ENCODE measurements at regions of chr5 and their contacts with region 1.

Region 1: GRCh38 chr5:122704243-122705036 is 70.4 kb upstream of the SNX2 start:
- DNase-seq: no peak
- H3K4me3 ChIP-seq: no peak overlapping the region
- H3K27me3 ChIP-seq: no peaks in the 10 kb centered on the region
- CTCF ChIP-seq: peak; percentile 70

Region 2: GRCh38 chr5:122653087-122653959 is 51.1 kb before region 1 on chr5:
- CTCF ChIA-PET with region 1: no interaction called
- POLR2A ChIA-PET with region 1: no interaction called
- DNase-seq: no peak
- H3K4me3 ChIP-seq: no peak overlapping the region
- H3K27me3 ChIP-seq: no peaks in the 10 kb centered on the region
- CTCF ChIP-seq: no peak

Region 3: DNA sequence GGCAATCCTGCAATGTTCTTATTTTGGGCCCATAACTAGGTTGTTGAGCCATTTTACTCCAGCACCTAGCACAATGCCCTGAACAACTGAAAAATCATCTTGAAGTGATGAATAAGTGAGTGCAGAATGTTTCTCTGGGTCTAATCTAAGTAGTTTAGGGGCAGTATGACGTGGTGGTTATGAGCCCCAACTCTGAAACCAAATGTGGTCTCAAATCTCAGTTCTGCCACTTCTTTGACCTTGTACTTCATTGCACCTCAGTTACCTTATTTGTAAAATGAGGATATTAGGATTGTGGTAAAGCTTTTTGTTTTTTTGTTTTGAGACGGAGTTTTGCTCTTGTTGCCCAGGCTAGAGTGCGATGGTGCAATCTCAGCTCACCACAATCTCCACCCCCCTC is 10.5 kb before region 1 on chr5:
- CTCF ChIA-PET with region 1: interaction called, 14 read pairs
- POLR2A ChIA-PET with region 1: no interaction called
- DNase-seq: no peak
- H3K4me3 ChIP-seq: no peak overlapping the region
- H3K27me3 ChIP-seq: no peaks in the 10 kb centered on the region
- CTCF ChIP-seq: no peak

Region 4: GRCh38 chr5:122719991-122720746 is 15.7 kb after region 1 on chr5:
- CTCF ChIA-PET with region 1: interaction called, 16 read pairs
- POLR2A ChIA-PET with region 1: no interaction called
- DNase-seq: no peak
- H3K4me3 ChIP-seq: no peak overlapping the region
- H3K27me3 ChIP-seq: no peaks in the 10 kb centered on the region
- CTCF ChIP-seq: no peak

Region 5: GRCh38 chr5:123157791-123158581 is 453.5 kb after region 1 on chr5:
- CTCF ChIA-PET with region 1: interaction called, 16 read pairs
- POLR2A ChIA-PET with region 1: no interaction called
- DNase-seq: peak; percentile 29
- H3K4me3 ChIP-seq: no peak overlapping the region
- H3K27me3 ChIP-seq: peaks cover 4% of the 10 kb centered on the region
- CTCF ChIP-seq: peak; percentile 48